ENCODE measurements at regions of chr2 and their contacts with region 1.

Region 1: DNA sequence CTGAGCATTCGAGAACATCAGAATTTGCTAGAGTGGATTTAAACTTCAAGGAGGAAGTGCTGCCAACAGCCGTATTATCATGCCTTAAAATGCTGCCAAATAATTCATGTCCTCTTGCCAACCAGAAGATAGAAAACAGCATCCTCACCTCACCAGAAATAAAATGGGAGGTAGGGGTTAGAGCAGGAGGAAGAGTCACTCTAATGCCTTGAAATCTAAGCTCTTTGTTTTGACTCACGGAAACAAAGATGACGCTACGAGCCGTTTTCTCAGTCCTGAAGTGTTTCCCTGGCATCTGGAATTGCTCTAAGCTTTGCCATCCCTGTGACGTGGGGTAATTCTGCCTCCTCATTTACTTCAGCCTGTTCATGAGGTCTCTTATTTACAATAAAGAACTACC is 97.1 kb downstream of the PRPF40A start:
- DNase-seq: no peak

Region 2: GRCh38 chr2:152189622-152190495 is 430.3 kb before region 1 on chr2:
- intact Hi-C with region 1: loop called in 1 of 2 experiments (anchors 5 kb)
- DNase-seq: no peak

Measured in posterior vena cava (tissue), 2 donors.